Mammary epithelial cell (primary cell): ENCODE measurements at regions of chr6 and their contacts with region 1.

Region 1: DNA sequence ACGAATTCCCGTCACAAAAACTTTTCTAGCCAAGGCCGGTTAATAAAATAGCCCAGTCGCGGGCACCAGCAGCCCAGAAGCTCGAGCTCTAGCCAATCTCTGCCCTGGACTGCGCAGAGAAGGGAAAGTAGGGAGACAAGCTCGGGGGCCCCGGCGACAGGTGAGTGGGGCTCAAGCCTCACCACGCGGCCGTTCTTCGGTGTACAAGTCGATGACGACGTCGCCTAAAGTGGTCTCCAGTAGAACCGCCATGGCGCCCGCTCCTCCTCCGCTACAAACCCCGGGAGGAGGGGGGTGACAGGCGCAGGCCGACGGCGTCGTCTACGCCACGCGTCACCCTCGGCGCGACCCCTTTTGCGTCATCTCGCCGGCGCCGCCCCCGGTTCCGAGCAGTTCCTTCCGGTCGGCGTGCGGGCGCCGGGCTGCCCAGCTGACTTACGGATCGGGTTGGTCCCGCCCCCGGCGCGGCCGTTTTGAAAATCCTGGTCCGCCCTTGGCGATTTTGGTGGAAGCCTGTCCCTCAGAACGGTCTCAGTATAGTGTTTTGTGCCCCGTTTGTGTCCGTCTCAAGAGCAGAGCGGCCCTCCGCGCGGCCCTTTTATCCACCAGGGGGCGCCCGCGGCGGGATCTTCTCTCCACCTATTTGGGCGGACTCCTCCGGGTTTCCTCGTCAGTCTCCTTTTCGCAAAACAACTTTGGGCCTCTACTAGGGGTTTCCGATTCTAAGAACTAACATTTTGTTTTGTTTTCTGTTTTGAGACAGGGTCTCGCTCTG is at the start of gene PPIL4:
- DNase-seq: peak; percentile 94
- H3K4me3 ChIP-seq: peak within 1 kb of the TSS; percentile 89 to 90 (median 90)
- H3K27ac ChIP-seq: peak within 1 kb of the TSS; percentile 97
- H3K4me1 ChIP-seq: peaks cover 4% of the 10 kb centered on the region
- H3K27me3 ChIP-seq: no peaks in the 10 kb centered on the region
- CTCF ChIP-seq: peak; percentile 75 to 88
- total RNA-seq, gene PPIL4: 18.7 to 28.8 TPM

Region 2: GRCh38 chr6:149431905-149432775 is 113.8 kb before region 1 on chr6:
- CTCF ChIA-PET with region 1: no interaction called
- dilution Hi-C with region 1: no loop called
- in situ Hi-C with region 1: no loop called
- intact Hi-C with region 1: no loop called
- DNase-seq: peak; percentile 65
- H3K4me3 ChIP-seq: peak overlapping the region in 1 of 3 experiments; percentile 17
- H3K27ac ChIP-seq: no peak overlapping the region
- H3K4me1 ChIP-seq: no peaks in the 10 kb centered on the region
- H3K27me3 ChIP-seq: no peaks in the 10 kb centered on the region
- CTCF ChIP-seq: peak; percentile 82 to 89

Region 3: GRCh38 chr6:149499066-149499465 is 46.9 kb before region 1 on chr6:
- CTCF ChIA-PET with region 1: no interaction called
- dilution Hi-C with region 1: no loop called
- in situ Hi-C with region 1: no loop called
- intact Hi-C with region 1: no loop called
- DNase-seq: peak; percentile 37
- H3K4me3 ChIP-seq: no peak overlapping the region
- H3K27ac ChIP-seq: no peak overlapping the region
- H3K4me1 ChIP-seq: no peaks in the 10 kb centered on the region
- H3K27me3 ChIP-seq: no peaks in the 10 kb centered on the region
- CTCF ChIP-seq: no peak

Region 4: GRCh38 chr6:149717588-149718458 is 171.9 kb after region 1 on chr6 and contains the start of gene LATS1:
- CTCF ChIA-PET with region 1: no interaction called
- dilution Hi-C with region 1: no loop called
- in situ Hi-C with region 1: no loop called
- intact Hi-C with region 1: loop called (anchors 5 kb)
- DNase-seq: peak; percentile 91
- H3K4me3 ChIP-seq: peak within 1 kb of the TSS; percentile 66 to 92 (median 91)
- H3K27ac ChIP-seq: peak within 1 kb of the TSS; percentile 86
- H3K4me1 ChIP-seq: no peaks in the 10 kb centered on the region
- H3K27me3 ChIP-seq: no peaks in the 10 kb centered on the region
- CTCF ChIP-seq: no peak
- total RNA-seq, gene LATS1: 19.8 to 26.6 TPM

Region 5: DNA sequence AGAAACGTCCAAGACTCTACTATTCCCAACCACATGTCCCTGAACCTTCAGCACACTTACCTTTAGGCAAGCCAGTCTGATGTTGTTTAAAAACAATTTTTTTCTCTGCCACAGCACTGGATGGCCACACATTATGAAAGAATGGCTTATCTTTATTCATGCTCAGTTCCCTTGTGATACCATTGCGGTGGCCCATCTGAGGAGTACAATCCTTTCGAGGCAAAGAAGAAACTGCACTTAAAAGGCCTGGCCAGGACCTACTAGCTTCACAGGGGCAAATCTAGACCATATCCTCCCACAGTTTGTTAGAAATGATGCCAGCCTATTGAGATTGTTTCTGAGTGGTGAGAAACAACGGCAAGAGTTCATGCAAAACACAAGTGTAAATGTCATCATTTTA is 965.4 kb after region 1 on chr6:
- CTCF ChIA-PET with region 1: no interaction called
- dilution Hi-C with region 1: no loop called
- in situ Hi-C with region 1: no loop called
- intact Hi-C with region 1: no loop called
- DNase-seq: no peak
- H3K4me3 ChIP-seq: no peak overlapping the region
- H3K27ac ChIP-seq: no peak overlapping the region
- H3K4me1 ChIP-seq: no peaks in the 10 kb centered on the region
- H3K27me3 ChIP-seq: no peaks in the 10 kb centered on the region
- CTCF ChIP-seq: no peak